Kidney (tissue), 22 donors: ENCODE measurements at regions of chr12 and their contacts with region 1.

Region 1: GRCh38 chr12:117836999-117837736 is 131.6 kb downstream of the KSR2 start:
- DNase-seq: peak; percentile 84 to 90 (median 86)
- H3K4me3 ChIP-seq: no peak overlapping the region
- H3K27ac ChIP-seq: no peak overlapping the region
- H3K4me1 ChIP-seq: no peaks in the 10 kb centered on the region
- H3K27me3 ChIP-seq: peaks cover 2% of the 10 kb centered on the region
- CTCF ChIP-seq: peak; percentile 97

Region 2: DNA sequence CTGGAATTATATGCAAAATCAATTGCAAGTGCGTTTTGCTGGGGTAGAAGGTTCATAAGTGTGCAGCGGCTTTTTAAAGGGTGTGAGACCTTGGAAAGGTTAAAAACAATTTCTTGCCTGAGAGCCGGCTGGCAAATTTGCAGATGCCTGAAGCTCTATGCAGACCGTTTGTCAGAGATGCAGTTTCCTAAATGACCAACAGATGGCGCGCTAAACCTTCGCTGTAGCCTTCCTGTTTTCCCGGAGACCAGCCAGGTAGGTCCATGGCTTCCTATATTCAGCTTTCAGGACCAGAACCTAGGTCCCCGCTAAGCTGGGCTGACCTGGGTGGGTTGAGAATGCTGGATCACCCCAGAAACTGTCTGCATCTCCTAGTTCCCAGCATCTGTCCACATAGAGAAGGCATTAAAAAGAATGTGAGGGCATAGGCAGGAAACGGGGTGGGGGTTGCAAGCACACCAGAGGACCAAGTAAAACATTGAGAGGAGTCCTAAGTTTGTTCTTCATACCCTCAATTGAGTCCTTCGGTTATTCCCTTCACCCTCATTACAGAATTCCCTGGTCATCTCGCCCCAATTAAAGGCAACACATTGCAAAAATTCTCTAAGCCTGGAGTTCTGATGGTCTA is 470.0 kb before region 1 on chr12:
- intact Hi-C with region 1: loop called (anchors 5 kb)
- DNase-seq: peak in 4 of 5 donors; percentile 85 to 88 (median 87)
- H3K4me3 ChIP-seq: no peak overlapping the region
- H3K27ac ChIP-seq: no peak overlapping the region
- H3K4me1 ChIP-seq: no peaks in the 10 kb centered on the region
- H3K27me3 ChIP-seq: peaks cover 17% of the 10 kb centered on the region
- CTCF ChIP-seq: peak; percentile 94